ENCODE measurements at regions of chr3 and their contacts with region 1.

Region 1: GRCh38 chr3:55721716-55722484 is 234.8 kb upstream of the WNT5A start:
- DNase-seq: peak; percentile 56
- ATAC-seq: peak; percentile 64
- H3K4me3 ChIP-seq: no peak overlapping the region
- H3K27ac ChIP-seq: no peak overlapping the region
- H3K4me1 ChIP-seq: no peaks in the 10 kb centered on the region
- H3K27me3 ChIP-seq: no peaks in the 10 kb centered on the region
- CTCF ChIP-seq: peak; percentile 64

Region 2: GRCh38 chr3:54853573-54854404 is 868.1 kb before region 1 on chr3:
- CTCF ChIA-PET with region 1: no interaction called
- POLR2A ChIA-PET with region 1: no interaction called
- intact Hi-C with region 1: loop called (anchors 5 kb)
- DNase-seq: peak; percentile 62
- ATAC-seq: peak; percentile 93
- H3K4me3 ChIP-seq: no peak overlapping the region
- H3K27ac ChIP-seq: no peak overlapping the region
- H3K4me1 ChIP-seq: peaks cover 13% of the 10 kb centered on the region; the same call in 1 of the 2 replicates
- H3K27me3 ChIP-seq: peaks cover 28% of the 10 kb centered on the region
- CTCF ChIP-seq: peak; percentile 95

Region 3: DNA sequence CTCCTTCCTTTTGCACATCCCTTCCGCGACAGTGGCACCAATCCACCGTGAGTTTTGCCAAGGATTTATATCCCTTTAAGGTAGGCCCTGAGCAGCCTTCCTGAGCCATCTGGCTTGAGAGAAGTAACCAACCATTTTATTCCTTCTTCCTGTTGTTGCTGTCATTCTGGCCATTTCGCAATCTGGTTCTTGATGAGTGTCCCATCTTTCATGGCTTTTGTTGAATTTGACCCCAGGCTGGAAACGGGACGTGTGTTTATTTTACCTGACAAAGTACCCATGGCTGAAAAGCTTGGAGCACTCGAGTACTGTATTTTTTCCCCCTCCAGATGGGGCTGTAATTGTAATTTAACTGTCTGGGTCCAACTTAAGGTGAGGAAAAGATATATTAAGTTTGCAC is 408.2 kb before region 1 on chr3:
- CTCF ChIA-PET with region 1: no interaction called
- POLR2A ChIA-PET with region 1: no interaction called
- intact Hi-C with region 1: loop called (anchors 10 kb)
- DNase-seq: peak; percentile 20
- ATAC-seq: no peak
- H3K4me3 ChIP-seq: no peak overlapping the region
- H3K27ac ChIP-seq: no peak overlapping the region
- H3K4me1 ChIP-seq: no peaks in the 10 kb centered on the region
- H3K27me3 ChIP-seq: 0 out of 2 replicates have a peak, but pooled peaks cover 3% of the 10 kb centered on the region
- CTCF ChIP-seq: no peak

Region 4: GRCh38 chr3:55521738-55522421 is 200.0 kb before region 1 on chr3:
- CTCF ChIA-PET with region 1: interaction called, 3 read pairs
- POLR2A ChIA-PET with region 1: no interaction called
- intact Hi-C with region 1: loop called (anchors 1 kb)
- DNase-seq: no peak
- ATAC-seq: no peak
- H3K4me3 ChIP-seq: no peak overlapping the region
- H3K27ac ChIP-seq: no peak overlapping the region
- H3K4me1 ChIP-seq: peaks cover 59% of the 10 kb centered on the region
- H3K27me3 ChIP-seq: no peaks in the 10 kb centered on the region
- CTCF ChIP-seq: no peak

Region 5: DNA sequence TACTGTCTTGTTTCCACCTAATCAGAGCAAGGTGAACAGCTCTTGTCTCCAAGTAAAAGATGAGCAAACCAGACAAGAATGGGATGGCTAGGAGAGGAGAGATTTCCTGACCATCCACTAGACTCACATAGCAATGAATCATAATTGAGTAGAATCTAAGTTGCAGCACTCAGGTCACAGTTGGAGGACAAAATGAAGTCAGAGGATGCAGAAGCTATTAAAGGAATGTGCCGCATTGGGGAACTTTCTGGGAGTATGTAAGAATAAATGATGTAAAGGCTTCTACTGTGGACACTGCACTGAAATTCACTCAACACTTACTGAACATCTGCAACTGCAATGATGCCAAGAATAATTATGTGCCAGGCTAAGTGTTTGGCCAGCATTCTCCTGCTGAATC is 17.4 kb before region 1 on chr3:
- CTCF ChIA-PET with region 1: no interaction called
- POLR2A ChIA-PET with region 1: no interaction called
- intact Hi-C with region 1: no loop called
- DNase-seq: no peak
- ATAC-seq: no peak
- H3K4me3 ChIP-seq: no peak overlapping the region
- H3K27ac ChIP-seq: no peak overlapping the region
- H3K4me1 ChIP-seq: no peaks in the 10 kb centered on the region
- H3K27me3 ChIP-seq: no peaks in the 10 kb centered on the region
- CTCF ChIP-seq: no peak

Region 6: GRCh38 chr3:56251343-56251945 is 529.5 kb after region 1 on chr3:
- CTCF ChIA-PET with region 1: no interaction called
- POLR2A ChIA-PET with region 1: no interaction called
- intact Hi-C with region 1: loop called (anchors 10 kb)
- DNase-seq: peak; percentile 76
- ATAC-seq: peak; percentile 83
- H3K4me3 ChIP-seq: no peak overlapping the region
- H3K27ac ChIP-seq: no peak overlapping the region
- H3K4me1 ChIP-seq: no peaks in the 10 kb centered on the region
- H3K27me3 ChIP-seq: peaks cover 8% of the 10 kb centered on the region; the same call in 1 of the 2 replicates
- CTCF ChIP-seq: peak; percentile 87

Measured in PC-3 (cell line).